ENCODE measurements at regions of chr1 and their contacts with region 1.

Region 1: DNA sequence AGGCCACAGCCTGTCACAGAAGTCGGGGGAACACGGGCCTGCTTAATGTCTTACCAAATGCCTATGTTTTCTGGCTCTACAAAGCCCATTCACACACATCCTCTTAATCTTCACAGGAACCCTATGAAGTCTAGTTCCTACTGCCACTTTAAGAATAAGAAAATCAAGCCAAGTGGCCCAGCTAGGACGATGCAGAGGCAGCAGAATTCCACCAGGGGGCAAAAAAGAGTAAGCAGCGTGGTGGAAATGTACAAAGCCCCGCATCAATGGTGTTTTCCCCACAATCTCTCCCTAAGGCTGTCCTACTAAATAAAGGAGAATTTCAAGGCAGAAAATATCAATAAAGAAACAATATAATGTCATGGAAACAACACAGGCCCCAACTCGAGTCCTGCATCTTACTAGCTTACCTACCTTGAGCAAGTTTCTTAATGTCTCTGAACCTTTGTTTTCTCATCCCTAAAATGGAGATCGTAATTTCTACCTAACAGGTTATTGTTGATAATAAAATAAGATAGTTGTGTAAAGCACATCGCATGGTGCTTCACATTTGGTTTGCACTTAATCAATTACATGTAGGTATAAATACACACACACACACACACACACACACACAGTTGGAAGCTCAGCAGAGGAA is 21.4 kb downstream of the SEC16B start:
- DNase-seq: peak; percentile 55
- CTCF ChIP-seq: peak; percentile 73

Region 2: GRCh38 chr1:176903474-176903873 is 1045.0 kb before region 1 on chr1:
- in situ Hi-C with region 1: loop called (anchors 25 kb)
- DNase-seq: no peak
- CTCF ChIP-seq: no peak

Region 3: GRCh38 chr1:177181631-177182291 is 766.7 kb before region 1 on chr1:
- in situ Hi-C with region 1: no loop called
- DNase-seq: peak; percentile 81
- CTCF ChIP-seq: peak; percentile 74

Measured in GM13976 (cell line).